Motor neuron (in vitro differentiated cells): ENCODE measurements at regions of chrX and their contacts with region 1.

Region 1: GRCh38 chrX:152343306-152343705 is 107.8 kb downstream of the GABRA3 start:
- ATAC-seq: peak in 1 of 8 experiments; percentile 17
- H3K4me3 ChIP-seq: no peak overlapping the region
- H3K27ac ChIP-seq: no peak overlapping the region
- H3K4me1 ChIP-seq: no peaks in the 10 kb centered on the region

Region 2: DNA sequence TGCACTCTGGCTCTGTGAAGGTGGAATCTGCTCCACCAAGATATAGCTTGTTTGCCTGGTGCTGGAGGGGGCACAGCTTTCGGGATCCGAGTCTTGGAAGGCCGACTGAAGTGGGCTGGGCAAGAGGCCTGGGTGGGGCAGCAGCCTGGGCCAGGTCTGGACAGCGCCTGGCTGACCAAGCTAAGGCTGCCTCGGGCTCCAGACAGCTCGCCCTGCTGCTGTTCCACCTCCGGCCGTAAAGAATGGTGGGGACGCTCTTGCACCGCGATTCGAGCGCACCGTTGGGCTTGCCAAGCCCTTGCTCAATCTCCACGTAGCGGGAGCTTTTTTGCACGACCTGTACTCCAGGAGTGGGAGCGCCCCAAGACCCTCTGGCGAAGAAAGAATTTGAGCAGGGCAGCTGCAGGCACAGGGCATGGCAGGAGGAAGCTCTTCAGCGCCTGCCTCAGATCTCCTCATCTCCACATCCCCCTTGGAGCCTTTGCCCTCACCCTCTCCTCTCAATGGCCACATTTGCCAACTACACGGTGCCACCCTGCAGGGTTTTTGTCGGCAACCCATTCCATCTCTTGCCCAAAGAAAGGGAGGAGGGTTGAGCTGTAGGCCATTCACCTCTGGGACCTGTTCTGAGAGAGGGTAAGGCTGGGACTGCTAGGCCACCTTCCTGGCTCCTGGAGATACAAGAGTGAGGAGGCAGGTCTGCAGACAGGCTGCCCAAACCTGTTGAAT is 589.8 kb before region 1 on chrX:
- in situ Hi-C with region 1: loop called in 1 of 9 experiments (anchors 25 kb)
- ATAC-seq: peak; percentile 53 to 95 (median 82)
- H3K4me3 ChIP-seq: no peak overlapping the region
- H3K27ac ChIP-seq: no peak overlapping the region
- H3K4me1 ChIP-seq: peaks cover 3 to 12% of the 10 kb centered on the region in 2 donors